ENCODE measurements at regions of chr14 and their contacts with region 1.

Region 1: DNA sequence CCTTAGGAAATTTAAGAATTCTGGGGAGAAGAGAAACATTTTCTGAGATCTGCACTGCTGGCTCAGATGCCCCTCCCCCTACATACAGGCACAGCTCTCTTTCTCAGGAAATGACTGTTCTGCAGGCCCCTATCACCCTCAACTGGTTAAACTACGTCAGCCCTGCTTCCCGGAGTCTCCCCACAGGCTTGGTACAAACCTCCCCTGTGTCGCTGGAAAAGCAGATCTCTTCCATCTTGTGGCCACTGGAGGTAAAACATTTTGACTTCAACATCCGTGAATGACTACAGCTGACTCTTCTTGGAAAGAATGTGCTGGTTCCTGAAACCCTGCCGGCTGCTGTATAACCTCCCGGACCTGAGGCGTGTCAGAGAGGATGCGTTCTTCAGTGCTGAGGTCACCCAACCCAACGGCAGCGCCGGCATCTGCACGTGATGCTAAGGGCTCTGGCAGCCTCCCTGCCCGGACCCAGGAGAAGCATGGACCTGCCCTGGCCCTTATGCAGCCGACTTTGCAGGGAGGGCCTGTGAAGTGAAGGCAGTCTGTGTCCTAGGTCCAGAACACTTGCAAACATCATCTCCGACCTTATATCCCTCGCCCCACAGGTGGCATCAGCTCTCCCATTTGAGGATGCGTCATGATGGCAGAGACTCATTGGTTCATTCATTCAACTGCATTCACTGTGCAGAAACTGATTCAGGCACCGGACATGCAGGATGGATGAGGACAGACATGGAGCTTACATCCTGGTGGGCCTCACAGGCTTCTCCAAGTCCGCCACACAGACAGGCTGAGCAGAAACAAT is 129.3 kb downstream of the GCH1 start:
- DNase-seq: peak; percentile 97 to 99
- ATAC-seq: peak; percentile 93 to 94
- H3K4me3 ChIP-seq: peak overlapping the region; percentile 2; the same call in 1 of the 3 replicates
- H3K27ac ChIP-seq: peak overlapping the region; percentile 77 to 86
- H3K4me1 ChIP-seq: peaks cover 27% of the 10 kb centered on the region
- CTCF ChIP-seq: peak; percentile 63
- EP300 ChIP-seq: peak in 1 of 2 experiments; percentile 51; a peak in 1 of 5 replicates
- POLR2A ChIP-seq: no peak
- RAD21 ChIP-seq: peak; percentile 72 to 80

Region 2: DNA sequence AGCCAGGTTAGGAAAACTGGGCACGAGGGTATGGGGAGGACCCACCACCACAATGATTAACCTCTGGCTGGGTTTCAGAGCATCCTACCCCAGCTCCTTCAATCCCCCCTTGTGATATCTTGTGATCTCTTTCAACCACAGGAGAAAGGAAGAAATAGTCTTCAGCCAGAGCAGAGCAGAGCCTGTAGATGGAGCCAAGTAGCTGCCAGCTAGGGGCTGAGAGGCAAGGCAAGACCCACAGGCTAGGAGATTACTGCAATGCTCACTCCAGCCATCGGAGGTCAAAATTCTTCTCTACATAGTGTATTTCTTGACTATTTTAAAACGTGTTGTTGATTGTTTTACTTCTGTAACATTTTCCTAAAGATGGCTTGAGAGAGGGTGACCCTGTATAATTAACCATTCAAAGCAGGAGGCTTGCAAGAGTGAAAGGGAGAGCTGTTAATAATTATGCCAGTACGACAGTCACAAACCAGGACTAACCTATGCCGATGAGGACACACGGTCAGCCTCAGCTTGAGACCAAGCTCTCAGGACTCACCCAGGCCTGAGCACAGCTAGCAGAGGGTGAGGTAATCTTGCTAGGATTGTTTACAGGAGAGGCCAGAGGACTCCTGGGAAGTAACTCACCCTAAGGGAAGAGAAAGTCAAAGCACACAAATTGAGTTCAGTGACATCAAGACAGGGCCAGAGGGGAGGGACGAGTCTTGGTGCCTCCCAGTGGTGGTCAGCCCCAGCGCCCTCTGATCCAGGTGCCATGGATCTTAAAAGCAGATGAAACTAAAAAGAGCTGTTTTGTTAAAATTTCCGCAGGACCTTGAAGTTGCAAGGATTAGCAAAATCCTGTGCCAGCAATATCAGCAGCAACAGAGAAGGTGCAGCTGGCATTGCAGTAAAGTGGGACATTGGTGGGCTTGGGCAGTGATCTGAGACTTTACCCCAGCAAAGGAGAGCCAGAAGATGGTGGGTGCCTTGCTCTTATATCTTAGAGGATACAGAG is 406.3 kb before region 1 on chr14:
- CTCF ChIA-PET with region 1: interaction called, 13 read pairs
- POLR2A ChIA-PET with region 1: no interaction called
- DNase-seq: peak; percentile 38 to 73
- ATAC-seq: peak; percentile 96 to 99
- H3K4me3 ChIP-seq: no peak overlapping the region
- H3K27ac ChIP-seq: peak overlapping the region; percentile 44 to 49; a peak in 5 of 6 replicates
- H3K4me1 ChIP-seq: peaks cover 13% of the 10 kb centered on the region; the same call in 2 of the 3 replicates
- CTCF ChIP-seq: peak; percentile 71
- EP300 ChIP-seq: no peak
- POLR2A ChIP-seq: no peak
- RAD21 ChIP-seq: peak; percentile 80 to 88

Region 3: GRCh38 chr14:54549862-54550261 is 223.5 kb before region 1 on chr14:
- CTCF ChIA-PET with region 1: interaction called, 28 read pairs
- POLR2A ChIA-PET with region 1: no interaction called
- DNase-seq: no peak
- ATAC-seq: 0 out of 6 replicates have a peak, but pooled peaks of 1 of the 2 experiments have one; percentile 34
- H3K4me3 ChIP-seq: no peak overlapping the region
- H3K27ac ChIP-seq: no peak overlapping the region
- H3K4me1 ChIP-seq: no peaks in the 10 kb centered on the region
- CTCF ChIP-seq: no peak
- EP300 ChIP-seq: no peak
- POLR2A ChIP-seq: no peak
- RAD21 ChIP-seq: no peak

Region 4: DNA sequence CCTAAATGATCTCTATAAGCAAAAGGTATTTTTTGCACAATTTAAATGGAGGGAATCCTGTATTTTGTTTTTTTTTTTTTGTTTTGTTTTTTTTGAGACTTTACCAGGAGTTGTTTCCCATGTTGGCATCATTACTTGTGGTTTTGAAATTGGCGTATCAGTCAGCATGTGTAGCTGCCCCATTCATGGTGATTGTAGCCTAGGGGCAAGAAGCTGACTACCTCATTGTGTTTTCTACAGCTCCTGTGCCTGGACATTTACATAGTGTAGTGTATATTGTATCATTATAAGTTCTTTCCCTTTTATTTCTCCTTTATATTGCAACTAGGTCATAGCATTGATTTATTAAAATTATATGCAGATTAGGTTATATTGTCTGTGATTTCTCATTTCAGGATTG is 181.9 kb before region 1 on chr14:
- CTCF ChIA-PET with region 1: interaction called, 14 read pairs
- POLR2A ChIA-PET with region 1: no interaction called
- DNase-seq: no peak
- ATAC-seq: no peak
- H3K4me3 ChIP-seq: no peak overlapping the region
- H3K27ac ChIP-seq: no peak overlapping the region
- H3K4me1 ChIP-seq: peaks cover 18% of the 10 kb centered on the region
- CTCF ChIP-seq: no peak
- EP300 ChIP-seq: no peak
- POLR2A ChIP-seq: no peak
- RAD21 ChIP-seq: no peak

Region 5: DNA sequence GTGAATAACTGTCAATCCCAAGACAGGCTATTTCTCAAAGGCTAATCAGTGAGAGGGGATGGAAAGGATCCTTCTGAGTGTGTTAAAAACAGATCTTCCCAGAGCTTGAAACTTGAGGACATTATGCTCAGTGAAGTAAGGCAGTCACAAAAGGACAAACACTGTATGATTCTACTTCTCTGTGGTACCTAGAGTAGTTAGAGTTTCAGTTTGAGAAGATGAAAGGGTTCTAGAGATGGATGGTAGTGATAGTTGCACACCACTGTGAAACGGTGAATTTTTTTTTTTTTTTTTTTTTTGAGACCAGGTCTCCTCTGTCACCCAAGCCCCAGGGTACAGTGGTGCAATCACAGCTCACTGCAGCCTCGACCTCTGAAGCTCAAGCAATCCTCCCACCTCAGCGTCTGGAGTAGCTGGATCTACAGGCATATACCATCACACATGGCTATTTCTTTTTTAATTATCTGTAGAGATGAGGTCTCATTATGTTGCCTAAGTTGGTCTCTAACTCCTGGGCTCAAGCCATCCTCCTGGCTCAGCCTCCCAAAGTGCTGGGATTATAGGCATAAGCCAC is 72.6 kb before region 1 on chr14:
- CTCF ChIA-PET with region 1: interaction called, 35 read pairs
- POLR2A ChIA-PET with region 1: no interaction called
- DNase-seq: no peak
- ATAC-seq: no peak
- H3K4me3 ChIP-seq: no peak overlapping the region
- H3K27ac ChIP-seq: no peak overlapping the region
- H3K4me1 ChIP-seq: peaks cover 10% of the 10 kb centered on the region; the same call in 2 of the 3 replicates
- CTCF ChIP-seq: no peak
- EP300 ChIP-seq: no peak
- POLR2A ChIP-seq: no peak
- RAD21 ChIP-seq: no peak

Region 6: DNA sequence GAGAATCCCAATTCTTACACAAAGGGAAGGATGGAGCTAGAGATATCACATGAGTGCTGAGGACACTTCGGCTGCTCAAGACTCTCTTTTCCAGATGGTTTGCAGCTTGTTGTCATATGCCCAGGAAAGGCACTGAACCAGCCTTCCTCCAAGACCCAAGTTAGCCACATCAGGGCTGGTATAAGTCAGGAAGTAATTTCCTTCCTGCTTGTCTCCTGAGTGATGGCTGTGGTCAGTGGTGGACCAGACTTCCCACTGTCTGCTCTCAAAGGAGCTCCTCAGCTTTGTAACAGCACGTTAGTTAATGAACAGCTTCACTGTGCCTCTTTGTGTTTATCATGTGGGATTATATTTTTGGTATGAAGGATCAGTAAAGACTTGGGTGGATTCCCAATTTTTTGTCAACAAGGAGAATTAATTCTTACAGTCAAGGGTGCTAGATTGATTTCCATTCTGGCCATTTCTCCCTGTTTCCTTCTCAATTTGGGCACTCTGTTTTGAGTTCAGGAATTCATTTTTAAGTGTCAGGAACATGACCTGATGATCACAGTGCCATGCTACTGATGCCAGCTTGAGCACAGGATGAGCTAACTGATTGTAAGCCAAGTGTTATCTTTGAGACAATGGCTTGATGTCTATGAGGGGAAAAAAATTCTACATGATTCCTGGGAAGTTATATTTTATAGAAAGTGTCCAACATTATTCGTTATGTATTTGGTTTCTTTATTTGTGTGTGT is 16.5 kb before region 1 on chr14:
- CTCF ChIA-PET with region 1: interaction called, 32 read pairs
- POLR2A ChIA-PET with region 1: interaction called, 3 read pairs
- DNase-seq: no peak
- ATAC-seq: no peak
- H3K4me3 ChIP-seq: no peak overlapping the region
- H3K27ac ChIP-seq: no peak overlapping the region
- H3K4me1 ChIP-seq: no peaks in the 10 kb centered on the region
- CTCF ChIP-seq: no peak
- EP300 ChIP-seq: no peak
- POLR2A ChIP-seq: no peak
- RAD21 ChIP-seq: no peak